Activated T-helper 2 cell treated with anti-CD3 and anti-CD28 coated beads, Interferon-gamma antibody, Interleukin-2, Interleukin-4, amounts not matched to agents 10 μg/mL and 5 μg/mL and 100 μg/mL, durations not matched to agents 14 hours and 24 hours and 36 hours (primary cell): ENCODE measurements at regions of chr5 and their contacts with region 1.

Region 1: DNA sequence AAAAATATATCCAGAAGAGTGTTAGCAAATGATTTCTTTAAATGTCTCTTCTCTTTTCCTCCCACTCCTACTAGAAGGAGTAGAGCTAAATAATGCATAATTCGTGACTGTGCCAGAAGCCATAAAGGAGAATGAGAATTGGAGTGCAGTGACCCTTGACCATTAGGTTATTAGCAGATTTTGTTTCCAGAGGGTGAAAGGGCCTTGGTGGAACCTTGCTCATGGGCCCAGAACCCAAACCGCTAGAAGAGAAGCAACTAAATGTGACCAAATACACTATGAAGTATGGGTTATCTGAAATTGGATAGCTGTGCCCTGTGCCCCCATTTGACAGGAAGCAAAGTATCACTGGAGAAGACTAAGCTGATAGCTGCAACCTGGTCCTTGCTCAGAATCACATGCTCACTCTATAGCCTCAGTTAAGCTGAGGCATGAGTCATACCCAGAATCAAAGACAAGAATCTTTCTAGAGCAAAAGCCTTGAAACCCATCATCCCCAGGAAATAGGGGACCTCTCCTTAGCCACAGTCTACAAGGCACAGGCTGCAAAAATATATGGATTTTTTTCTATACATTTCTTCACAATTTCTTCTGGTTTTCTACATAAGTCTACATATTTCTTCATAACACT is 36.3 kb downstream of the CAPSL start:
- DNase-seq: peak; percentile 49
- H3K4me3 Mint-ChIP-seq: peak overlapping the region; percentile 28
- H3K27ac Mint-ChIP-seq: peak overlapping the region; percentile 83
- H3K4me1 Mint-ChIP-seq: peaks cover 78% of the 10 kb centered on the region
- H3K27me3 Mint-ChIP-seq: no peaks in the 10 kb centered on the region

Region 2: DNA sequence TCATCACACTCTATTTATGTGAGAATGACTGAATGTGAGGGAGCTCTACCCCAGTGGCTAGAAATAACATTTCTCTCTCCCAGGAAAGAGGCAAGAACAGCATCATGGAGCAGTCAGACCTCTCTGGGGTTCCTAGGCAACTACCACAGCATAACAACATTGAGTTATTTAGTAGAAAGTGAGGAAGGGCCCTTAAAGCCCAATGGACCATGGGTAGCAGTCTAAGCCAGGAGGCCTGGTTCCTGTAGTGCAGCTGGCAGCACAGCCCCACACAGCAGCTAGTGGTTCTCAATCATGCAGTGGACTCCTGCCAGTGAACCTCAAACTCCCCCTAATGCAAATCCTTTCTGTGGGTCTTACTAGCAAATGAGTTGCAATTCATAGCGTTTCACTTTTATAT is 229.2 kb before region 1 on chr5:
- intact Hi-C with region 1: loop called (anchors 5 kb)
- DNase-seq: peak; percentile 16
- H3K4me3 Mint-ChIP-seq: no peak overlapping the region
- H3K27ac Mint-ChIP-seq: peak overlapping the region; percentile 42
- H3K4me1 Mint-ChIP-seq: peaks cover 46% of the 10 kb centered on the region
- H3K27me3 Mint-ChIP-seq: no peaks in the 10 kb centered on the region

Region 3: DNA sequence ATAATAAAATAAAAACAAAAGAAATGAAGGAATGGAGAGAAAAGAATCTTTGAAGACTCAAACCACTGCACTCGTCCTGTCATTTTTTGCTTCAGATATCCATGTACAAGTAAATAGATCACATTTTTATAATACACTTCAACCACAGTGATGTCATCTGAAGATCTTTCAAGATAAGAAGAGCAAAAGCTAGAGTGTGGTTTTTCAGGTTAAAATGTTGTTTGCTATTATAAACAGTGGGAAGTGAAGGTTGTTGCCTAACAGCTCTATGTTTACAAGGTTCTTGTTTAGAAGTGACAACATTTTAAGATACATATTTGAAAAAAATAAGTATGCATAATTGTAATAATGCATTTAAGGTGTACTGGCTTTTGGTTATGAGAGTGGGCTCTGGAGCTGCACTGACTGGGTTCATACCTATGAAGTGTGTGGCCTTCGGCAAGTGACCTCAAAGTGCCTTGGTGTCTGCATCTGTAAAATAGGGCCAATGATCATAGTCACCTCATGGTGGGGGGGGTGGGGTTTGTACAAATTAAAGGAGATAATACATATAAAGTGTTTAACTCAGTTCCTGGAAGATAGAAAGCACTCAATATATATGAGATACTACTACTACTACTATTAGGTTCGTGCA is 90.9 kb before region 1 on chr5:
- intact Hi-C with region 1: loop called (anchors 1 kb)
- DNase-seq: no peak
- H3K4me3 Mint-ChIP-seq: peak overlapping the region; percentile 27
- H3K27ac Mint-ChIP-seq: peak overlapping the region; percentile 94
- H3K4me1 Mint-ChIP-seq: peaks cover 47% of the 10 kb centered on the region
- H3K27me3 Mint-ChIP-seq: no peaks in the 10 kb centered on the region

Region 4: GRCh38 chr5:35842856-35843255 is 59.3 kb before region 1 on chr5:
- intact Hi-C with region 1: no loop called
- DNase-seq: no peak
- H3K4me3 Mint-ChIP-seq: no peak overlapping the region
- H3K27ac Mint-ChIP-seq: no peak overlapping the region
- H3K4me1 Mint-ChIP-seq: peaks cover 19% of the 10 kb centered on the region
- H3K27me3 Mint-ChIP-seq: no peaks in the 10 kb centered on the region

Region 5: DNA sequence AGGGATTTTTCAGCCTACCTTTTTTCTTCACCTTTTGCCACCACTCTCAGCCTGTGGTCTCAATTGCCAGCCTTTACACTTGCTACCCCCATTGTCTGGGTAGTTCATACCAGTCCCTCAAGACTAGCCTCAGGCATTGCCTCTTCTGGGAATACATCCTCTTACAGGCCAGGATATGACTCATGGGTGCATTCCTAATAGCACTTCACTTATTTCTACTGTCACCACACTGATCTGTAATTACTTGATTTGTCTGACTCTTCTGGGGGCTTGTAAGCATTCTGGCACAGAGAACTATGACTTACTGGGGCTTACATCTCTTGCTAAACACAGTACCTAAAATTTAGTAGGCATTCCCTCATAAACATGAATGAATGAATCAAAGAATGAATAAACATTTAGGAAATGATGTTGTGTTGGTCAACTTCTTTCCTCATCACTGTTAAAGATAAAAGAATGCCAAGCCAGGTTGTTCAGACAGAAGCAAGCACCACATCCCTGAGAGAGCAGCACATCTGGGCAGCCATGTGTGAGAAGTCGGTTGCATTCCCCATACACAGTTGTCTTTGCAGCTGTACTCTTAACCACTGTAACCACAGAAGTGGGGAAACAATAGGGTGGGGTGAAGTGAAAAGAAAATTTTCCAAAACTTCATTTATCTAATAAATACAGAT is 17.9 kb before region 1 on chr5:
- intact Hi-C with region 1: loop called (anchors 1 kb)
- DNase-seq: no peak
- H3K4me3 Mint-ChIP-seq: no peak overlapping the region
- H3K27ac Mint-ChIP-seq: peak overlapping the region; percentile 74
- H3K4me1 Mint-ChIP-seq: peaks cover 33% of the 10 kb centered on the region
- H3K27me3 Mint-ChIP-seq: no peaks in the 10 kb centered on the region

Region 6: DNA sequence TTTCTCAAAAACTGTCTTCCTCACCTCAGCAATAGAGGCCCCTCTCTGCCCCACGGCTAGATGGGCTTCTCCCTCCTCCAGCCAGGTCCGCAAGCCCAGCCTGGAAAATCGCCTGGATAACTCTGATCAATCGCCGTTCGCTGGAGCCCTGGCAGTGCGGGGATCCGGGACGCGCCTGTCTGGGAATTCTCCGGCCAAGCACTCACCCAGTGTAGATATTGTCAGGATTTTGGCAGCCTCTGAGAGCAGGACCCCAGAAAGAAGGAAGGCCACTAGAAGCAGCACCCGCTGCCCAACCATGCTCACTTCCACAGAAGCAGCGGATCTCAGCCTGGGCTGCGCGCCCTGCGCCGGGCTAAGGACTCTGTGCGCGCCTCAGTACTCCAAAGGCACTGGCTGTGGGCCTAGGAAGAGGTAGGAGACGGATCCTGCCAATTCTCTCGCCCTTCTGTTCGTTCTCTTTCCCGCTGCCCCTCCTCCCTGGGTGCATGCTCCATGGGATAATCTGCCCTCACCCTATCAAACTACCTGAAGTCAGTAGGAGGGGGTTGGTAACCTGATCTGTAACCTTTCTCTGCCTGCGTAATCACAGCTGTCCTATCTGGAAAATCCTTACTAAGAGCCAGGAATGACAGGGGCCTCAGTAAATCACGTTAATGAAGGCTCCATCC is 88.9 kb after region 1 on chr5 and contains the start of gene UGT3A1:
- intact Hi-C with region 1: no loop called
- DNase-seq: no peak
- H3K4me3 Mint-ChIP-seq: no peak within 1 kb of the TSS
- H3K27ac Mint-ChIP-seq: no peak within 1 kb of the TSS
- H3K4me1 Mint-ChIP-seq: no peaks in the 10 kb centered on the region
- H3K27me3 Mint-ChIP-seq: no peaks in the 10 kb centered on the region
- total RNA-seq, gene UGT3A1: not detected in 2 replicates